HepG2 (cell line): ENCODE measurements at regions of chr9 and their contacts with region 1.

Region 1: DNA sequence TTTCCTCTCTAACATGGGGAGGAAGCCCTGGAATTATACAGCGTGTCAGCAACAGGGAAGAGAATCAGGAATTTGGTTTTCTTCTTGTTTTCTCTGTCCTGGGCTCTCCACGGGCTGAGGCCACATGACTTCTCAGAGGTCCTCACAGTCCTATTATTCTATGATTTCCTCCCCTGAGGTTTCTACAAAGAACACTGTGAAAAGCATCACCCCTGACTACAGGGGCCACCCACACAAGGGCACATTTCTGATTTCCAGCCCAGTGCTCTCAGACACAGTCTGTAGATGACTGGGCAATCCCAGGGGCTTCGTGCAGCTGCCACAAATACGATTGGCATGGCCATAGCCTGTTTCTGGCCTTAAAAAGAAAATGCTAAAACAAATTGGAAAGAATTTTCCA is 284.9 kb downstream of the CEMIP2 start:
- DNase-seq: no peak
- ATAC-seq: no peak
- H3K4me3 ChIP-seq: no peak overlapping the region
- H3K27ac ChIP-seq: no peak overlapping the region
- H3K4me1 ChIP-seq: no peaks in the 10 kb centered on the region
- H3K27me3 ChIP-seq: peaks cover 0 to 8% of the 10 kb centered on the region in 2 experiments; a peak in 1 of 5 replicates
- CTCF ChIP-seq: no peak
- EP300 ChIP-seq: no peak
- POLR2A ChIP-seq: no peak
- RAD21 ChIP-seq: no peak

Region 2: DNA sequence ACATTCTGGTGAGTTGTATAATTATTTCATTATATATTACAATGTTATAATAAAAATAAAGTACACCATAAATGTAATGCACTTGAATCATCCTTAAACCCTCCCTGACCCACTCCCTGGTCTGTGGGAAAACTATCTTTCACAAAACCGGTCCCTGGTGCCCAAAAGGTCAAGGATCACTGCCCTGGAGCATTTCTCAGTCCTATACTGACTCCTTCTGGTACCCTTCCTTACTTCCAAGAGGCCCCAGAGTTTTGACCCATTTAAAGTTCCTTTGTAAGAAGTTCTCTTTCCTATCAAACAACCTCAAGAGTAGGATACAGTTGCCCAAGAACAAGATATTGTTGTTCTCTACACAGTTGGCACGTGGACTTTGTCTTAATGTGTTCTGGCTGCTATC is 273.1 kb before region 1 on chr9:
- CTCF ChIA-PET with region 1: no interaction called
- POLR2A ChIA-PET with region 1: no interaction called
- in situ Hi-C with region 1: no loop called
- intact Hi-C with region 1: no loop called
- DNase-seq: no peak
- ATAC-seq: no peak
- H3K4me3 ChIP-seq: no peak overlapping the region
- H3K27ac ChIP-seq: no peak overlapping the region
- H3K4me1 ChIP-seq: no peaks in the 10 kb centered on the region
- H3K27me3 ChIP-seq: no peaks in the 10 kb centered on the region
- CTCF ChIP-seq: peak; percentile 36; the same call in 1 of the 2 replicates
- EP300 ChIP-seq: no peak
- POLR2A ChIP-seq: no peak
- RAD21 ChIP-seq: no peak

Region 3: DNA sequence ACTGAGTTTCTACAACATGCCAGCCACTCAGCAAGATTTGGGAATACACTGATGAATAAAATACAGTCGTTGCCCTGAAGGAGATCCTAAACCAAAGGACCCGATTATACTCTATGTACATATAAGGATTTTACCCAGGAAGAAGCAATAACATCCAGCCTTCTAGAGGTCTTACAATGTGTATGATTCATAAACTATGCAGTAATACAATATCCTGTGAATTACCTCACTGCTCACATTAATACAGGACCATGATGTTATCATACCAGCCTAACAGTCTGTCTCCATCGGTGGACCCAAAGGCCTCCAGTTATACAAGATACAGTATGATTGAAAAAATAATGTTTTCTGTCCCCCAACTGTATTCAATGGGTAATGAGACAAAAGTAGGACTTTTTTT is 51.5 kb before region 1 on chr9:
- CTCF ChIA-PET with region 1: no interaction called
- POLR2A ChIA-PET with region 1: no interaction called
- in situ Hi-C with region 1: no loop called
- intact Hi-C with region 1: no loop called
- DNase-seq: no peak
- ATAC-seq: no peak
- H3K4me3 ChIP-seq: no peak overlapping the region
- H3K27ac ChIP-seq: no peak overlapping the region
- H3K4me1 ChIP-seq: no peaks in the 10 kb centered on the region
- H3K27me3 ChIP-seq: no peaks in the 10 kb centered on the region
- CTCF ChIP-seq: no peak
- EP300 ChIP-seq: no peak
- POLR2A ChIP-seq: no peak
- RAD21 ChIP-seq: no peak

Region 4: DNA sequence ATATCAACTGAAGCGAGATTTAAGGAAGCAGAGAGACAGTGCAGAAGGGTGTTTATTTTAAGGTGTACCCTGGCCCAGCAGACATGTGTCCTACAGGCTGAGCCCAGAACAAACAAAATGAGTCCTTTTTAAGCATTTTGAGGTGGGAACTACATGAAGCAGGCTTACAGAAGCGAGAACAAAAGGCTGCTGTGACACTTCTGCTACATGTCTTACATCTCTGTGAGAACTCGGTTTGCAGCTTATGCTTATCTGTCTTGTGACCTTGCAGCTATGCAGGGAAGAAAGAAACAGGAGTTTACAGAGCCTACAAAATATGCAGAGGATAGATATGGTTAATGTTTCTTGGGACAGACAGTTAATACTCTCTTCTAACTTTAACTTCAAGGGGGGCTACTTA is 11.0 kb before region 1 on chr9:
- CTCF ChIA-PET with region 1: no interaction called
- POLR2A ChIA-PET with region 1: no interaction called
- in situ Hi-C with region 1: no loop called
- intact Hi-C with region 1: no loop called
- DNase-seq: no peak
- ATAC-seq: no peak
- H3K4me3 ChIP-seq: no peak overlapping the region
- H3K27ac ChIP-seq: no peak overlapping the region
- H3K4me1 ChIP-seq: no peaks in the 10 kb centered on the region
- H3K27me3 ChIP-seq: no peaks in the 10 kb centered on the region; a peak in 1 of 5 replicates
- CTCF ChIP-seq: no peak
- EP300 ChIP-seq: no peak
- POLR2A ChIP-seq: no peak
- RAD21 ChIP-seq: no peak

Region 5: GRCh38 chr9:71519098-71519696 is 35.8 kb after region 1 on chr9:
- CTCF ChIA-PET with region 1: no interaction called
- POLR2A ChIA-PET with region 1: no interaction called
- in situ Hi-C with region 1: no loop called
- intact Hi-C with region 1: loop called (anchors 1 kb)
- DNase-seq: no peak
- ATAC-seq: no peak
- H3K4me3 ChIP-seq: no peak overlapping the region
- H3K27ac ChIP-seq: no peak overlapping the region
- H3K4me1 ChIP-seq: no peaks in the 10 kb centered on the region
- H3K27me3 ChIP-seq: peaks cover 0 to 13% of the 10 kb centered on the region in 2 experiments; a peak in 2 of 5 replicates
- CTCF ChIP-seq: no peak
- EP300 ChIP-seq: no peak
- POLR2A ChIP-seq: no peak
- RAD21 ChIP-seq: no peak

Region 6: GRCh38 chr9:71541436-71541835 is 58.0 kb after region 1 on chr9:
- CTCF ChIA-PET with region 1: no interaction called
- POLR2A ChIA-PET with region 1: no interaction called
- in situ Hi-C with region 1: no loop called
- intact Hi-C with region 1: no loop called
- DNase-seq: no peak
- ATAC-seq: no peak
- H3K4me3 ChIP-seq: no peak overlapping the region
- H3K27ac ChIP-seq: no peak overlapping the region
- H3K4me1 ChIP-seq: no peaks in the 10 kb centered on the region
- H3K27me3 ChIP-seq: peaks cover 0 to 6% of the 10 kb centered on the region in 2 experiments; a peak in 1 of 5 replicates
- CTCF ChIP-seq: no peak
- EP300 ChIP-seq: no peak
- POLR2A ChIP-seq: no peak
- RAD21 ChIP-seq: no peak